Sigmoid colon (tissue), 7 donors: ENCODE measurements at regions of chr12 and their contacts with region 1.

Region 1: GRCh38 chr12:63843721-63844390 is 644 bp upstream of the SRGAP1 start:
- DNase-seq: peak; percentile 97
- H3K4me3 ChIP-seq: peak overlapping the region; percentile 71 to 92 (median 85)
- H3K27ac ChIP-seq: peak overlapping the region; percentile 89 to 99 (median 95)
- H3K4me1 ChIP-seq: peaks cover 0 to 27% (median 21%) of the 10 kb centered on the region in 4 donors
- H3K27me3 ChIP-seq: no peaks in the 10 kb centered on the region
- CTCF ChIP-seq: peak; percentile 68 to 91 (median 85)
- EP300 ChIP-seq: no peak
- POLR2A ChIP-seq: no peak

Region 2: DNA sequence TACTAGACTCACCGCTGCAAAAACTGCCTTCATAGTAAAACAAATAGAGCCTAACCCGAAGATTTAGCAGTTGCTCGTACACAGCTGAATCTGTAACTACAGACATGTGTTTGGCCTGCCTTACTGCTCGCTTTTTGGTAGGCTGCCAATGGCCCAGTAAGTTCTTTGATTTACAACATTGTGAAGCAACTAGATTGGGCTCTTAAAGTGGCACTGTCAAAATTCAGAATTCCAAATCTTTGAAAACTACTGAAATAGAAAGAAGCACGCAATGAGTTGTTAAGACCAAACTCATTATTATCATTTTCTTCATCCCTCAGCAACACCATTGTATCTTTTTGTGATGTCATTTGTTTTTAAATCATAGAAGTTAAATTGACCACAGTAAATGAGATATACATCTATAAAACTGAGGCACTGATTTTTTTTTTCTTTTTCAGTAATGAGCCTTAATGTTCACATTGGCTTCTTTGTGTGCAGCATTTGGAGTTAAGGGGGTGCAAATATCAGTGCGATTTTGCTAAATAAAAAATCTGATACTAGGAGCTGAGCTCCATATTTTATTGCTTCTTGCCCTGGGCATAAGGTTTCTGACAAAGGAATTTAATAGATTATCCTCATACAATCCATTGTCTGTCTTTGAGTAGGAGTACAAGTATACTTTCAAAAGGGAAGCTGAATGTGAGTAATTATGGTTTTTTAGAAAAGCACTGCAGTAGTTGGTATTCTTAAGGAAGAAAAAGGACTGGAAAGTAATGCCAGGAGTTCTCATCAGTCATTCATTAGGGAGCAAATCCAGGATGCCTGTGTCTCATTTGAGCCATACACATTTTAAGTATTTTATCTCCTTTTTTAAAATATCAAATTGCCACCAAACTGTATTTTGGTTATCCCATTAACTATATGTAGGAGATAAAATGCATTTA is 239.7 kb after region 1 on chr12:
- intact Hi-C with region 1: loop called (anchors 5 kb)
- DNase-seq: peak; percentile 94
- H3K4me3 ChIP-seq: peak overlapping the region in 1 of 4 donors; percentile 7
- H3K27ac ChIP-seq: peak overlapping the region; percentile 67 to 83 (median 77)
- H3K4me1 ChIP-seq: peaks cover 0 to 63% (median 46%) of the 10 kb centered on the region in 4 donors
- H3K27me3 ChIP-seq: no peaks in the 10 kb centered on the region
- CTCF ChIP-seq: no peak
- EP300 ChIP-seq: peak in 1 of 4 donors; percentile 34
- POLR2A ChIP-seq: no peak

Region 3: GRCh38 chr12:64181504-64182291 is 337.8 kb after region 1 on chr12:
- intact Hi-C with region 1: loop called (anchors 1 kb)
- DNase-seq: peak; percentile 79
- H3K4me3 ChIP-seq: no peak overlapping the region
- H3K27ac ChIP-seq: peak overlapping the region; percentile 6 to 77 (median 68)
- H3K4me1 ChIP-seq: peaks cover 0 to 16% (median 7%) of the 10 kb centered on the region in 4 donors
- H3K27me3 ChIP-seq: no peaks in the 10 kb centered on the region
- CTCF ChIP-seq: peak; percentile 41 to 67 (median 62)
- EP300 ChIP-seq: no peak
- POLR2A ChIP-seq: no peak

Region 4: GRCh38 chr12:64256166-64256800 is 412.4 kb after region 1 on chr12:
- intact Hi-C with region 1: loop called (anchors 1 kb)
- DNase-seq: no peak
- H3K4me3 ChIP-seq: no peak overlapping the region
- H3K27ac ChIP-seq: no peak overlapping the region
- H3K4me1 ChIP-seq: no peaks in the 10 kb centered on the region
- H3K27me3 ChIP-seq: no peaks in the 10 kb centered on the region
- CTCF ChIP-seq: peak in 3 of 4 experiments; percentile 44 to 61 (median 46)
- EP300 ChIP-seq: no peak
- POLR2A ChIP-seq: no peak